ENCODE measurements at regions of chr3 and their contacts with region 1.

Region 1: DNA sequence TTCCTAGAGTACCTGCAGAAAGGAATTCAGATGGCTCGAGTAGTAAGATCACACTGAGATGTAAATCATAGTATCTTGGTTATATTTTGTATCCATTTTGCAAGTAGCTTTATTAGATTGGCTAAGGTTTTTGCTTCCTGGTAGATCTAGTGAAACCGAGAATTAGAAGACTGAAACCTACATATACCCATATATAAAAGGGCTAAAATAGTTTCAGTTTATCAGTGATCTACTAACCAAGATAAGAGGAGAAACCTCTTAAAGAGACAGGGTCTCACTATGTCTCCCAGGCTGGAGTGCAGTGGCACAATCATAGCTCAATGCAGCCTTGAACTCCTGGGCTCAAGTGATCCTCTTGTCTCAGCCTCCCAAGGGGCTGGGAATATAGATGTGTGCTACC is 135.3 kb downstream of the PCCB start:
- DNase-seq: no peak
- H3K4me3 ChIP-seq: no peak overlapping the region
- H3K27ac ChIP-seq: no peak overlapping the region
- H3K4me1 ChIP-seq: no peaks in the 10 kb centered on the region
- H3K27me3 ChIP-seq: no peaks in the 10 kb centered on the region
- CTCF ChIP-seq: no peak

Region 2: DNA sequence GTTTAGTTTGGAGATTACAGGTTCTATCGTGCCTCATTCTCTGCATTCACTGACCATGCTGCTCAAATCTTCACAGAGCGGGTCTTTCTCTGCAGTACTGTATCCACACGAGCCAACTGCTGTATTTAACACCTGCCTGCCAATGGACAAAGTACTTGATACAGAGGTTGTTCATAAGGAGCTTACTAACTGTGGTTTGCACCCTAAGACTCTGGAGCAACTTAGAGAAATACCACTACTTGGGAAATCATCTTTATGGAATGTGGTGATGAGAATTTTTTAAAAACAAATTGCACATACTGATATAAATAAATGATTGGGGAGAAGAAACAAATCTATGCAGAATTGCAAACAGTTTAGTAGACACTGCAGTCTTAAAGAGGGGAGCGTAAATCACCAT is 330.0 kb before region 1 on chr3:
- CTCF ChIA-PET with region 1: no interaction called
- dilution Hi-C with region 1: no loop called
- in situ Hi-C with region 1: no loop called
- intact Hi-C with region 1: no loop called
- DNase-seq: no peak
- H3K4me3 ChIP-seq: no peak overlapping the region
- H3K27ac ChIP-seq: no peak overlapping the region
- H3K4me1 ChIP-seq: no peaks in the 10 kb centered on the region
- H3K27me3 ChIP-seq: no peaks in the 10 kb centered on the region
- CTCF ChIP-seq: no peak

Region 3: GRCh38 chr3:136728918-136729317 is 343.5 kb after region 1 on chr3:
- CTCF ChIA-PET with region 1: no interaction called
- dilution Hi-C with region 1: no loop called
- in situ Hi-C with region 1: loop called (anchors 25 kb)
- intact Hi-C with region 1: no loop called
- DNase-seq: peak; percentile 79
- H3K4me3 ChIP-seq: peak overlapping the region; percentile 14 to 33 (median 19)
- H3K27ac ChIP-seq: peak overlapping the region; percentile 47
- H3K4me1 ChIP-seq: peaks cover 19% of the 10 kb centered on the region
- H3K27me3 ChIP-seq: no peaks in the 10 kb centered on the region
- CTCF ChIP-seq: no peak